Gastrocnemius medialis (tissue), 4 donors: ENCODE measurements at regions of chr17 and their contacts with region 1.

Region 1: DNA sequence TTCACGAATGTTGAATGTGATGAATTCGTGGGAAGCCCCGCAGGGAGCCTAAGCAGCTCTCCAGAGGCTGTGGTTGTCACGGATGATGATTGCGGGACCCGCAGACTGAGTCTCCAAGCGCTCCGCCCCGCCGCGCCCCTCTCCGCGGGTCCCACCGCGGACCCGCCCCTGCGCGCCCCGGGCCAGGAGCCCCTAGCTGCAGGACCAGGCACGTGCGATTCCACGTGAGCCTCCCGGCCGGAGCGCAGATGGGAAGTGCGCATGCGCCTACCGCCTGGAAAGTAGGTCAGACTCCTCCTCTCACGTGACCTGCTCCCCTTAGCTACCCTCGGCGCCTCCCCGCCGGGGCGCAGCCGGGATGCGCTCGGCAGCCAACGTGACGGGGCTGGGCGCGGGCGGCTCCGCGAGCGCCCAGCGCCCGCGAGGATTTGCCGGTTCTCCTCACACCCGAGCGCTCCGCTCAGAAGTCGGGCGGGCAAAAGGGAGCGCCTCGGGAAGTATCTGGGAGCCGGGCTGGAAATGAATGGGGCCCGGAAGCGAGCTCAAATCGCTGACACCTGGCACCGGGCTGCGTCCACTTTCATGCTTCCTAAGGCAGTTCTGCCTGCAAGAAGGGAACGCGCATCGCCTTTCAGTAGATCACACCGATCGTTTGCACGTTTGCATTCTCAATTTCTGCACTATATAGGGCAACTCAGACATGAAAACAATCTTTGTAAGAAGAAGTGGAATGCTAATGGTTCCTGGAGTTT is 26.4 kb upstream of the HLF start:
- DNase-seq: peak; percentile 86 to 92
- ATAC-seq: peak; percentile 96 to 97
- H3K4me3 ChIP-seq: peak overlapping the region; percentile 56 to 67 (median 61)
- H3K27ac ChIP-seq: peak overlapping the region; percentile 74 to 86 (median 82)
- H3K4me1 ChIP-seq: peaks cover 10 to 11% of the 10 kb centered on the region in 2 donors
- H3K27me3 ChIP-seq: no peaks in the 10 kb centered on the region
- CTCF ChIP-seq: peak in 3 of 5 experiments; percentile 12 to 21 (median 21)
- POLR2A ChIP-seq: peak in 1 of 2 donors; percentile 68

Region 2: DNA sequence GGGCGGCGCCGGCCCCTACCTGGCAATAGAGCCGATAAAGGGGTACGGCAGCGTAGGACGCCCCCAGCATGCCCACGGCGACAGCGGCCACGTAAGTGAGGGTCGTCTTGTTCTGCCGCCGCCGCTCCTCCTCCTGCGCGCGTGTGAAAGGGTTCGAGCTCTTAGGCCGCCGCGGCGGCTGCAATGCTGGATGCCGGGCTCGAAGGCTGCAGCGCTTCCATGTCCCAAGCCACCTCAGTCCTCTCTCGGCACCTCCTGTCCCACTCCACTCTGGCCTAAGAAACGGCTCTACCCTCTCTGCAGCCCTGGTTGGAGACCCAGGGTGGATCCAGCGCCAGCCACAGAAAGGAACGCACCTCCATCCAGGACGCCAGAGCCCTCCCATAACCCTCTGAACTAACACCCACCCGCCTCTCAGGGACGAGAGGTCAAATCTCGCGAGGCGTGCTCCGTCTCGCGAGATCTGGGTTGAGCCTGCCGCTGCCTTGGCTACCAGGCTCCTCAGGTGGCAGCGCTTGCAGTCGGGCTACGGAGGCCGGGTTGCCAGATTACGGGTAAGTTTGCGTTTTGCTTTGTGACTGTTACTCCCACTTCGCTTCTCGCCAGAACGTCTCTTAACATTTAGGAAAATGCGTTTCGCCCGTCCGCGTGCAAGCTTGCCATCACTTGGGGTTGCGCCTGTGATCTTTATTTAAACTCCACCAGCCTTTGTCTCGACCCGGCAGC is 269.9 kb before region 1 on chr17 and contains the starts of genes COX11 and STXBP4:
- in situ Hi-C with region 1: no loop called
- intact Hi-C with region 1: loop called (anchors 10 kb)
- DNase-seq: peak; percentile 91 to 95
- ATAC-seq: peak; percentile 98 to 99
- H3K4me3 ChIP-seq: peak within 1 kb of the TSS; percentile 96 to 98 (median 97)
- H3K27ac ChIP-seq: peak within 1 kb of the TSS; percentile 82 to 94 (median 86)
- H3K4me1 ChIP-seq: peaks cover 20 to 36% of the 10 kb centered on the region in 2 donors
- H3K27me3 ChIP-seq: no peaks in the 10 kb centered on the region
- CTCF ChIP-seq: peak in 2 of 5 experiments; percentile 32 to 58
- POLR2A ChIP-seq: peak; percentile 53 to 70
- total RNA-seq, gene COX11: 36.4 to 77.2 (median 67.6) TPM
- total RNA-seq, gene STXBP4: 1.4 to 20.7 (median 9.6) TPM

Region 3: DNA sequence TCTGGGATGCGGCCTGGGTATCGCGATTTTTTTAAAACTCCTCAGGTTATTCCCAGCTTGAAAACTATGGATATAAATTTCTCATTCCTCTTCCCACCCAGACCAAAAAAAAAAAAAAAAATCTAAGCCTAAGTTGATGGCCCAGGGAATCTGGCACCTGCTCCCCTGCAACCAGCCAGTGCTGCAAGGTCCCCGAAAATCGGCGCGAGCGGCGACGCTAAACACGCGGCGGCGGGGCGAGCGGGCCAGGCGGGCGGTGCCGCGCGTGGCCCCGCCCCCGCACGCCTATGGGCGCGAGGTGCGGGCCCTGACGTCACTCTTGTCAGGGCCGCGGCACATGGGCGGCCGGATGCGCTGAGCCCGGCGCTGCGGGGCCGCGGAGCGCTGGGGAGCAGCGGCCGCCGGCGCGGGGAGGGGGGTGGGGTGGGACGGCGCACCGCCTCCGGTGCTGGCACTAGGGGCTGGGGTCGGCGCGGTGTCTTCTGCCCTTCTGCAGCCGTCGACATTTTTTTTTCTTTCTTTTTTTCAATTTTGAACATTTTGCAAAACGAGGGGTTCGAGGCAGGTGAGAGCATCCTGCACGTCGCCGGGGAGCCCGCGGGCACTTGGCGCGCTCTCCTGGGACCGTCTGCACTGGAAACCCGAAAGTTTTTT is 26.4 kb after region 1 on chr17 and contains the start of gene HLF:
- in situ Hi-C with region 1: no loop called
- intact Hi-C with region 1: loop called (anchors 1 kb)
- DNase-seq: peak; percentile 59 to 72
- ATAC-seq: peak; percentile 85
- H3K4me3 ChIP-seq: peak within 1 kb of the TSS; percentile 66 to 88 (median 72)
- H3K27ac ChIP-seq: peak within 1 kb of the TSS; percentile 78 to 92 (median 78)
- H3K4me1 ChIP-seq: peaks cover 19 to 29% of the 10 kb centered on the region in 2 donors
- H3K27me3 ChIP-seq: no peaks in the 10 kb centered on the region
- CTCF ChIP-seq: peak in 2 of 5 experiments; percentile 8 to 19
- POLR2A ChIP-seq: peak; percentile 79 to 82
- total RNA-seq, gene HLF: 7.7 to 14.8 (median 10.4) TPM

Region 4: DNA sequence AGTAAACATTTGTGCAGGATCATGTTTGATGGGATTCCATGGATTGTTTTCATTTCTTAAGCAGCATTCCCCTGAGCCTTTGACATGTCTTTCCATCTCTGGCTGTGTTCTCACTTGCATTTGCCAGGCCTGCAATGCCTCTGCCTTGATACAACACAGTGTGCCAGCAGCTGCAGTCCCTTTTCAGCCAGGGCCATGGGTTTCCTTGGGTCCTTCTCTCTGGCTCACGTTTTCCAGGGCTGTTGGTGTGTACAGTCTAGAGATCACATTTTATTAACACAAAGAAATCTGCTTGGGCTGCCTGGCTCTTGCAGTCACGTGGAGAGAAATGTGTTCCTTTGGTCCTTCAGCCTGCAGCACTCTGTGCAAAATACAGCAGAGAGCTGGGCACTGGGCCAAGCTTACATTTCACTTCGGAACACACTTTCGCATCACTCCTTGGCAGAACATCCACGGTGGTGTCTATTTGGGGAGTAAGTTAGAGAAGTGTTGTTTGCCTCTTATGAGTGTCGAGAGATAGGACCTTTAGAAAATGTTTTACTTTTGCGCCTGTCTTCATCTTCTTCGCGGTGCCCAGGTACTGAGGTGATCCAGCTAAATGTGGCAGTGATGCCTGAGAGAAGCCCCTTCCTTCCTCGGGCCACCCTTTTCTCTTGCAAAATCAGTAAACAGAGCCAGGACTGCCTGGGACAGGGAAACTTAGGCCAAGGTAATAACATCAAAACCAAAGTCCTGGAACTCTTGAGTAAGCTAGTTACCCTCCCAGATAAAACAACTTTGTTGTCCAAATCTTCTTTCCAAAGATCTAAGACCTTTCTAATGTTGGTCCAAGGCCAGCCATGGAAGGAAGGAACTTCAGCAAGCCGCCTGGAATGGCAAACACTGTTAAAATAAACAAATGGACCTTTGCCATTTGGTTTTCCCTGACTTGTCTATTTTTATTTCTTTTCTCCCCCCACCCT is 47.3 kb after region 1 on chr17:
- in situ Hi-C with region 1: no loop called
- intact Hi-C with region 1: loop called (anchors 2 kb)
- DNase-seq: peak; percentile 93 to 94
- ATAC-seq: peak; percentile 89 to 93
- H3K4me3 ChIP-seq: peak overlapping the region; percentile 13 to 39 (median 18)
- H3K27ac ChIP-seq: peak overlapping the region; percentile 82 to 96 (median 88)
- H3K4me1 ChIP-seq: peaks cover 36 to 53% of the 10 kb centered on the region in 2 donors
- H3K27me3 ChIP-seq: no peaks in the 10 kb centered on the region
- CTCF ChIP-seq: no peak
- POLR2A ChIP-seq: no peak

Region 5: GRCh38 chr17:55366020-55366481 is 127.7 kb after region 1 on chr17:
- in situ Hi-C with region 1: no loop called
- intact Hi-C with region 1: no loop called
- DNase-seq: no peak
- ATAC-seq: no peak
- H3K4me3 ChIP-seq: no peak overlapping the region
- H3K27ac ChIP-seq: no peak overlapping the region
- H3K4me1 ChIP-seq: no peaks in the 10 kb centered on the region
- H3K27me3 ChIP-seq: no peaks in the 10 kb centered on the region
- CTCF ChIP-seq: no peak
- POLR2A ChIP-seq: no peak